ENCODE measurements at regions of chr10 and their contacts with region 1.

Region 1: GRCh38 chr10:97463363-97464132 is 17.6 kb downstream of the ZDHHC16 start:
- DNase-seq: peak; percentile 62 to 63
- ATAC-seq: peak; percentile 67 to 75; a peak in 5 of 6 replicates
- H3K4me3 ChIP-seq: no peak overlapping the region
- H3K27ac ChIP-seq: peak overlapping the region in 1 of 2 experiments; percentile 10; a peak in 1 of 6 replicates
- H3K4me1 ChIP-seq: peaks cover 8% of the 10 kb centered on the region
- CTCF ChIP-seq: peak; percentile 95
- EP300 ChIP-seq: no peak
- POLR2A ChIP-seq: no peak
- RAD21 ChIP-seq: peak; percentile 83 to 84

Region 2: DNA sequence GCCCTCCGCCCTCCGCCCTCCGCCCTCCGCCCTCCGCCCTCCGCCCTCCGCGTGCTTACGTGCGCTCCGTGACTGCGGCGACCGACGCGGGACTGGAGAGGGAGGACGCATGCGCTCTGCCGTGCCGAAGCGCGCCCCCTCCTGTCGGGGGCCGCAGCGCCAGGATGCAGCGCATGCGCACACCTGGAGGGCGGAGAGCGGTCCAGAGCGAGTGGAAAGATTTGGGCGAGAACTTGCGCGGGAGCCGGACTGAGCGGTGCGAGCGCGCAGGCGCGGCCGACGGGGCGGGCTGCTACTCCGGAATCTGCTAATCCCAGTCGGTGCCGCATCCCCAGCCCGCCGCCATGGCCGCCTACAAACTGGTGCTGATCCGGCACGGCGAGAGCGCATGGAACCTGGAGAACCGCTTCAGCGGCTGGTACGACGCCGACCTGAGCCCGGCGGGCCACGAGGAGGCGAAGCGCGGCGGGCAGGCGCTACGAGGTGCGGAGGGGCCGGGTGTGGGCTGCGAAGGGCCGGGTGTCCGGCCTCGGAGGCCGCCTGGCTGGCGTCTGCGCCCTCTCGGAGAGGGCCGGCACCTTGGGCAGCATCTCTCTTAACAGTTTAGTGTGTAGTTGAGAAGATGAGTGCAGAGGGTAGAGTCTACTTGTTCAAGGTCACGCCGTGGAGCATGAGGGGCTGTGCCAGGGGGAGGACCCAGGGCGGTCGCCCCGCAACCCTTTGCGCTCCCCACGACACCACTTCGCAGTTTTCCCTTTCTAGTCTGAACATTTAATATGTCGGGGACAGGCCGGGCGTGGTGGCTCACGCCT is 37.4 kb before region 1 on chr10 and contains the start of gene PGAM1:
- CTCF ChIA-PET with region 1: no interaction called
- POLR2A ChIA-PET with region 1: no interaction called
- DNase-seq: peak; percentile 96 to 97
- ATAC-seq: peak; percentile 92 to 94
- H3K4me3 ChIP-seq: peak within 1 kb of the TSS; percentile 73
- H3K27ac ChIP-seq: peak within 1 kb of the TSS; percentile 88 to 91
- H3K4me1 ChIP-seq: peaks cover 17% of the 10 kb centered on the region; the same call in 2 of the 3 replicates
- CTCF ChIP-seq: peak; percentile 62
- EP300 ChIP-seq: no peak
- POLR2A ChIP-seq: peak; percentile 48
- RAD21 ChIP-seq: no peak
- polyA plus RNA-seq, gene PGAM1: 459 and 516 TPM in 2 replicates

Region 3: GRCh38 chr10:97475936-97476594 is 12.5 kb after region 1 on chr10:
- CTCF ChIA-PET with region 1: interaction called, 23 read pairs
- POLR2A ChIA-PET with region 1: no interaction called
- DNase-seq: no peak
- ATAC-seq: no peak; a peak in 1 of 6 replicates
- H3K4me3 ChIP-seq: no peak overlapping the region
- H3K27ac ChIP-seq: no peak overlapping the region
- H3K4me1 ChIP-seq: peaks cover 7% of the 10 kb centered on the region; the same call in 2 of the 3 replicates
- CTCF ChIP-seq: no peak
- EP300 ChIP-seq: no peak
- POLR2A ChIP-seq: no peak
- RAD21 ChIP-seq: no peak

Region 4: GRCh38 chr10:97534746-97535367 is 71.3 kb after region 1 on chr10:
- CTCF ChIA-PET with region 1: interaction called, 17 read pairs
- POLR2A ChIA-PET with region 1: no interaction called
- DNase-seq: peak; percentile 61 to 67
- ATAC-seq: peak; percentile 77 to 87
- H3K4me3 ChIP-seq: no peak overlapping the region
- H3K27ac ChIP-seq: 0 out of 6 replicates have a peak overlapping the region, but pooled peaks of 1 of the 2 experiments have one; percentile 16
- H3K4me1 ChIP-seq: peaks cover 20% of the 10 kb centered on the region
- CTCF ChIP-seq: peak; percentile 59
- EP300 ChIP-seq: no peak
- POLR2A ChIP-seq: no peak
- RAD21 ChIP-seq: peak; percentile 52 to 74

Region 5: GRCh38 chr10:97543025-97543575 is 79.6 kb after region 1 on chr10:
- CTCF ChIA-PET with region 1: interaction called, 218 read pairs
- POLR2A ChIA-PET with region 1: no interaction called
- DNase-seq: peak; percentile 76 to 95
- ATAC-seq: peak; percentile 69 to 86
- H3K4me3 ChIP-seq: no peak overlapping the region
- H3K27ac ChIP-seq: peak overlapping the region; percentile 86 to 92
- H3K4me1 ChIP-seq: peaks cover 57% of the 10 kb centered on the region
- CTCF ChIP-seq: no peak
- EP300 ChIP-seq: no peak
- POLR2A ChIP-seq: no peak
- RAD21 ChIP-seq: no peak